ENCODE measurements at regions of chr5 and their contacts with region 1.

Region 1: GRCh38 chr5:80191991-80192398 is 63.9 kb downstream of the SERINC5 start:
- DNase-seq: peak in 7 of 9 donors; percentile 61 to 72 (median 68)
- ATAC-seq: peak; percentile 85
- H3K4me3 ChIP-seq: peak overlapping the region; percentile 46
- H3K4me3 Mint-ChIP-seq: peak overlapping the region; percentile 79 to 96 (median 85)
- H3K27ac ChIP-seq: peak overlapping the region; percentile 79
- H3K27ac Mint-ChIP-seq: peak overlapping the region; percentile 87 to 99 (median 95)
- H3K4me1 ChIP-seq: peaks cover 69 to 89% of the 10 kb centered on the region in 2 donors
- H3K4me1 Mint-ChIP-seq: peaks cover 61 to 97% (median 87%) of the 10 kb centered on the region in 7 donors
- H3K27me3 ChIP-seq: no peaks in the 10 kb centered on the region
- H3K27me3 Mint-ChIP-seq: no peaks in the 10 kb centered on the region

Region 2: DNA sequence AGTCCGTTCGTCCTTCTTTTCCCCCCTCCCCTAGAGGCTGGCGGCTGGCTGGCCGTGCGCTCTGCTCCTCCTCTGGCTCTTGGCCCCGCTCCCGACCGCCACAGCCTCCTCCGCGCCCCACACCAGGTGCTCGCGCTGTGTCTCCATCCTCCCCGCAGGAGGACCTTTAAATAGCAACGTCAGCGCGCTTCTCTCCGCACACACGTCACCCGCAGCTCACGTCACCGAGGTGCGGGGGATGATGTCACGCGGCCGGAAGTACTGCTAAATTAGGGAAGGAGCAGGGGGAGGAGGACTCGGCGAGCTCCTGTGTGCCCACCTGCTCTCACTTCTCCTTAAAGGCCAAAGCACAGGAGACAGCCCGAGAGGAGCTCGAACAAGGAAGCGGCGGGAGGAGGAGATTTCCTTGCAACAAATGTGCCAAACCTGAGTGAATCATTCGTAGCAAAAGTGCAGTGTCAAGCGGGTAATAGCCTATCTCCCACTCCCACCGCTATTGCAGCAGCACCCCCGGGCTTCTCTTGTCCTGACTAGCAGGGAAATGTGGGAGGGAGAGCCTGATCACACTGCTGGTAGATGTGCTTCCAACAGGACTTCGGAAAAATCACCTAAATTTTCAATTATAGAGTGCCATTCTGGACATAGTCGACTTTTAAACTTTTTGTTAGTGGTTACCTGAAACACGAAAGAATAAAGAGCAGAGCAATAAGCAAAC is 677.4 kb before region 1 on chr5:
- CTCF ChIA-PET with region 1: no interaction called
- POLR2A ChIA-PET with region 1: no interaction called
- intact Hi-C with region 1: loop called (anchors 5 to 10 kb)
- DNase-seq: peak; percentile 80 to 94 (median 91)
- ATAC-seq: peak; percentile 91
- H3K4me3 ChIP-seq: peak overlapping the region; percentile 71
- H3K4me3 Mint-ChIP-seq: peak overlapping the region; percentile 88 to 99 (median 98)
- H3K27ac ChIP-seq: peak overlapping the region; percentile 97
- H3K27ac Mint-ChIP-seq: peak overlapping the region; percentile 93 to 99 (median 98)
- H3K4me1 ChIP-seq: peaks cover 4 to 26% of the 10 kb centered on the region in 2 donors
- H3K4me1 Mint-ChIP-seq: peaks cover 6 to 53% (median 40%) of the 10 kb centered on the region in 7 donors
- H3K27me3 ChIP-seq: peaks cover 0 to 7% of the 10 kb centered on the region in 2 donors
- H3K27me3 Mint-ChIP-seq: peaks cover 0 to 27% (median 23%) of the 10 kb centered on the region in 5 donors

Region 3: DNA sequence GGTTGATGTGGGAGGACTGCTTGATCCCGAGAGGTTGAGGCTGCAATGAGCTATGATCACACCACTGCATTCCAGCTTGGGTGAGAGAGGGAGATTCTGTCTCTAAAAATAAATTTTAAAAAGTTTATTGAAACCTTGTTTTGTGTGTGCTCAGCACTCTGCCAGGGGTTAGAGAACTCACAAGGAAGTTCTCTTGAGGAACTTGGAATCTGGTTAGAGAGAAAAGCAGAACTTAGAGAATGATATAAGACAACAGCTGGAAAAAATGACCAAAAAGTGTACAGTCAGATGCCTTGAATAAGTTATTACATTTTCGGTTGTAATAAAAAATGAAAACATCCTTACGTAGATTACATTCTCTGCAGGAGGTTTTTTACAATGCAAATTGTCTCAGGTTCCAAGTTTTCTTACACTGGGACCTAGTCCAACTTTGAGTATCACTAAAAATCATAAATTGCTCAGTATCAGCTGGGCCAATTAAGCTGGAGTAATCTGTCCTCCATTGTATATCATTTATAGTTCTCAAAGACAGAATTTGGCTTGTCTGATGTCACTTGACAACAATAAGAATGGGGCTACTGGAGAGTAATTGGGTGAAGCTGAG is 601.5 kb before region 1 on chr5:
- CTCF ChIA-PET with region 1: no interaction called
- POLR2A ChIA-PET with region 1: no interaction called
- intact Hi-C with region 1: no loop called
- DNase-seq: no peak
- ATAC-seq: peak; percentile 44
- H3K4me3 ChIP-seq: no peak overlapping the region
- H3K4me3 Mint-ChIP-seq: no peak overlapping the region
- H3K27ac ChIP-seq: no peak overlapping the region
- H3K27ac Mint-ChIP-seq: no peak overlapping the region
- H3K4me1 ChIP-seq: no peaks in the 10 kb centered on the region
- H3K4me1 Mint-ChIP-seq: no peaks in the 10 kb centered on the region
- H3K27me3 ChIP-seq: no peaks in the 10 kb centered on the region
- H3K27me3 Mint-ChIP-seq: peaks cover 0 to 4% (median 0%) of the 10 kb centered on the region in 5 donors

Region 4: DNA sequence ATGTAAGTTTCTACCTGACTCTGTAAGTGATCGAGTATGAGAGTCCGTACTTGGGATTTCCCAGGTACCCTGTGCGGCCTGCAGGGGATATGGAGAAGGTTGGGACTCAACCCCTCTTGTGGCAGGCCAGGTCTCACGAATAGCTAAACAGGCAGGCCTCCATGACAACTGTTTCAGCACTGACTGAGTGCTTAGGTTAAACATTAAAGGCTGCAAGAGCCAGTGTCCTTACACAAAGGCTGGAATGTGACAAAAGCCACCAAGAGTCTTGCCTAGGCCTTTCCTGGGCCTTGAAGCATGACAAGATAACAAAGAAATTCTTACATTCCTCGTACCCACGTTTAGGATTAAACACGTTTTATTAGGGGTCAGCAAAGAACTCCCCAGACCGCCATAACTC is 98.2 kb before region 1 on chr5:
- CTCF ChIA-PET with region 1: interaction called, 17 read pairs
- POLR2A ChIA-PET with region 1: interaction called, 5 read pairs
- intact Hi-C with region 1: loop called in 1 of 2 experiments (anchors 5 kb)
- DNase-seq: no peak
- ATAC-seq: no peak
- H3K4me3 ChIP-seq: no peak overlapping the region
- H3K4me3 Mint-ChIP-seq: peak overlapping the region in 2 of 10 donors; percentile 3 to 5
- H3K27ac ChIP-seq: no peak overlapping the region
- H3K27ac Mint-ChIP-seq: peak overlapping the region in 3 of 9 donors; percentile 9 to 62 (median 54)
- H3K4me1 ChIP-seq: peaks cover 0 to 18% of the 10 kb centered on the region in 2 donors
- H3K4me1 Mint-ChIP-seq: peaks cover 15 to 53% (median 47%) of the 10 kb centered on the region in 7 donors
- H3K27me3 ChIP-seq: no peaks in the 10 kb centered on the region
- H3K27me3 Mint-ChIP-seq: peaks cover 0 to 4% (median 0%) of the 10 kb centered on the region in 5 donors

Region 5: GRCh38 chr5:80153586-80154126 is 38.3 kb before region 1 on chr5:
- CTCF ChIA-PET with region 1: no interaction called
- POLR2A ChIA-PET with region 1: interaction called, 11 read pairs
- intact Hi-C with region 1: loop called in 1 of 2 experiments (anchors 1 kb)
- DNase-seq: peak in 7 of 9 donors; percentile 57 to 78 (median 69)
- ATAC-seq: peak; percentile 60
- H3K4me3 ChIP-seq: no peak overlapping the region
- H3K4me3 Mint-ChIP-seq: peak overlapping the region; percentile 48 to 88 (median 80)
- H3K27ac ChIP-seq: peak overlapping the region; percentile 78
- H3K27ac Mint-ChIP-seq: peak overlapping the region; percentile 85 to 100 (median 99)
- H3K4me1 ChIP-seq: peaks cover 9 to 49% of the 10 kb centered on the region in 2 donors
- H3K4me1 Mint-ChIP-seq: peaks cover 17 to 89% (median 72%) of the 10 kb centered on the region in 7 donors
- H3K27me3 ChIP-seq: no peaks in the 10 kb centered on the region
- H3K27me3 Mint-ChIP-seq: no peaks in the 10 kb centered on the region

Region 6: GRCh38 chr5:80216753-80217596 is 25.0 kb after region 1 on chr5:
- CTCF ChIA-PET with region 1: interaction called, 6 read pairs
- POLR2A ChIA-PET with region 1: interaction called, 57 read pairs
- intact Hi-C with region 1: no loop called
- DNase-seq: peak in 1 of 9 donors; percentile 58
- ATAC-seq: no peak
- H3K4me3 ChIP-seq: peak overlapping the region; percentile 35
- H3K4me3 Mint-ChIP-seq: peak overlapping the region; percentile 45 to 89 (median 81)
- H3K27ac ChIP-seq: peak overlapping the region; percentile 63
- H3K27ac Mint-ChIP-seq: peak overlapping the region in 8 of 9 donors; percentile 83 to 99 (median 93)
- H3K4me1 ChIP-seq: peaks cover 15 to 87% of the 10 kb centered on the region in 2 donors
- H3K4me1 Mint-ChIP-seq: peaks cover 57 to 100% (median 91%) of the 10 kb centered on the region in 7 donors
- H3K27me3 ChIP-seq: no peaks in the 10 kb centered on the region
- H3K27me3 Mint-ChIP-seq: no peaks in the 10 kb centered on the region

Region 7: DNA sequence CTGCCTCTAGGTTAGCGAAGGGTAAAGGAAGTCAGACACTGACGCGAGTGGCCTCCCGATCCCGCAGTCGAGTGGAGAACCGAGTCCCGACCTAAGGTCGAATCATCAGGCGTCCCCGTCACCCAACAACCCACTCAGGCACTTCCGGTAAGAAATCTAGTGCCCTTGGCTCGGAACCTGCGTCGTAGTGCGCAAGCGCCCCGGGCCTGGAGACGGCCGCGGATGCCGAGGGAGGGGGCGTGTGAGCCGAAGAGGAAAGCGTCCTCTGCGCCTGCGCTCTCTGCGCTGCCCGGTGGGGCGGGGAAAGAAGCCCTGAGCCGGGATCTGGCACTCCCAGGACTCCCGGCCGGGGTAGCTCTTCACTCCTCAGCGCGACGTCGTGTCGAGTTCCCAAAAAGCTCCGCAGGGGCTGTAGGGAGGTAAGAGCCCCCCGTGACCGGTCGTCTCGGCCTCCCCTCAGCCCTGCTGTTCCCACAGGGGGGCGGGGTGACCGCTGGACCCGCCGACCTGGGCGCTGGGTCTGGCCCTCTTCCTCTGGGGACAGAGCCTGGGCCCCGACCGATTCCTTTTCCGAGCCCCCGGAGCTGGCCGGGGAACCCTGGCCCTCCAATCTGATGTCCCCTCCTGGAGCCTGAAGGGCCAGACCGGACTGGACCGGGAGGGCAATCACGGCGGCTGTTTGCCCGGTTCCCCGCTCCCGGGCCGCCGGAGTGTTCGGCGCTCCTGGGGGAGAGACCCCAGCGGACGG is 215.9 kb after region 1 on chr5 and contains the start of gene ZFYVE16:
- CTCF ChIA-PET with region 1: no interaction called
- POLR2A ChIA-PET with region 1: no interaction called
- intact Hi-C with region 1: loop called in 1 of 2 experiments (anchors 5 kb)
- DNase-seq: peak; percentile 93 to 98 (median 94)
- ATAC-seq: peak; percentile 93
- H3K4me3 ChIP-seq: peak within 1 kb of the TSS; percentile 94
- H3K4me3 Mint-ChIP-seq: peak within 1 kb of the TSS; percentile 91 to 99 (median 96)
- H3K27ac ChIP-seq: peak within 1 kb of the TSS; percentile 85
- H3K27ac Mint-ChIP-seq: peak within 1 kb of the TSS; percentile 97 to 100 (median 99)
- H3K4me1 ChIP-seq: peaks cover 0 to 3% of the 10 kb centered on the region in 2 donors
- H3K4me1 Mint-ChIP-seq: peaks cover 20 to 32% (median 21%) of the 10 kb centered on the region in 7 donors
- H3K27me3 ChIP-seq: no peaks in the 10 kb centered on the region
- H3K27me3 Mint-ChIP-seq: peaks cover 0 to 7% (median 0%) of the 10 kb centered on the region in 5 donors
- total RNA-seq, gene ZFYVE16: 12.0 to 32.0 (median 26.0) TPM